Gastrocnemius medialis (tissue), 4 donors: ENCODE measurements at regions of chr10 and their contacts with region 1.

Region 1: DNA sequence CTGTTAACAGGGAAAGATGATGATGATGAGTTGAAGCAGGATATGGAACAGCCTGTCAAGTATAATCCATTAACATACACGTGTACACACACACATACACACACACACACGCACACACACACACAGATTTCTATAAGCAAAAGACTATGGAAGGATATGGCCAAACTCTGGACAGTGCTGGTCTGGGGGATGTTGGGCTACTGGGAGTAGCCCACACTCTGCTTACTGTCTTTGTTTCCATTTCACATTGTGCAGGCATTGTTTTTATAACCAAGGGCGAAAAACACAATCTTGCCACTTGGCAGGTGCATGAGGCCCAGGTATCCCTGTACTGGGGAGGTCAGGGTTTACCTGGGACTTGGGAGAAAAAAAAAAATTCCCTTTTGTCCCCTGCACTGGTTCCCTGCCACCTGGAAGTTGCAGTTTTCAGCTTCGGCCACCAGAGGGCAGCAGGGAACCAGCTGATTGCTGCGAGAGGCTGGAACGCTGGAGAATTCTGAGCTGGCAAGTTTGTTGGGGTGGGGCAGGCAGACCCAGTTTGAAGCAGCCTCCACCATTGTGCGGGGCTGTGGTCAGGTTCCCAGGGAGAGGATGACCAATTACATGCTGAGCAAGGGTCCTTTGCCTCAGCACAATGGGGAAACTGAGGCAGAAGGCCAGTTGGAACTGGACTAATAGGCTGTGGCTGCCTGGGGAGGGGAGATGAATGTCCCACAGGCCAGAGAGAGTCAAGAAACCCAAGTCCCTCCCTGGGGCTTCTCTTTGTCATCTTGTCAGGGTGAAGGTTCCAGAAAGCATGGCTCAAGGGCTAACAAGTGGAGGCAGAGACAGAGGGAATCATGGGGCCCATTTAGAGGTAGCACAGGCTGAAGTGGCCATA is 27.3 kb downstream of the PPIF start:
- DNase-seq: peak; percentile 62 to 70
- ATAC-seq: peak; percentile 57 to 71
- H3K4me3 ChIP-seq: no peak overlapping the region
- H3K27ac ChIP-seq: no peak overlapping the region
- H3K4me1 ChIP-seq: peaks cover 14 to 22% of the 10 kb centered on the region in 2 donors
- H3K27me3 ChIP-seq: no peaks in the 10 kb centered on the region
- CTCF ChIP-seq: peak; percentile 93 to 99 (median 97)
- POLR2A ChIP-seq: no peak

Region 2: GRCh38 chr10:79438021-79438698 is 63.6 kb after region 1 on chr10:
- in situ Hi-C with region 1: no loop called
- intact Hi-C with region 1: no loop called
- DNase-seq: peak in 1 of 2 donors; percentile 21
- ATAC-seq: no peak
- H3K4me3 ChIP-seq: no peak overlapping the region
- H3K27ac ChIP-seq: peak overlapping the region; percentile 91 to 98 (median 94)
- H3K4me1 ChIP-seq: peaks cover 97 to 100% of the 10 kb centered on the region in 2 donors
- H3K27me3 ChIP-seq: no peaks in the 10 kb centered on the region
- CTCF ChIP-seq: peak in 4 of 5 experiments; percentile 9 to 46 (median 33)
- POLR2A ChIP-seq: no peak

Region 3: DNA sequence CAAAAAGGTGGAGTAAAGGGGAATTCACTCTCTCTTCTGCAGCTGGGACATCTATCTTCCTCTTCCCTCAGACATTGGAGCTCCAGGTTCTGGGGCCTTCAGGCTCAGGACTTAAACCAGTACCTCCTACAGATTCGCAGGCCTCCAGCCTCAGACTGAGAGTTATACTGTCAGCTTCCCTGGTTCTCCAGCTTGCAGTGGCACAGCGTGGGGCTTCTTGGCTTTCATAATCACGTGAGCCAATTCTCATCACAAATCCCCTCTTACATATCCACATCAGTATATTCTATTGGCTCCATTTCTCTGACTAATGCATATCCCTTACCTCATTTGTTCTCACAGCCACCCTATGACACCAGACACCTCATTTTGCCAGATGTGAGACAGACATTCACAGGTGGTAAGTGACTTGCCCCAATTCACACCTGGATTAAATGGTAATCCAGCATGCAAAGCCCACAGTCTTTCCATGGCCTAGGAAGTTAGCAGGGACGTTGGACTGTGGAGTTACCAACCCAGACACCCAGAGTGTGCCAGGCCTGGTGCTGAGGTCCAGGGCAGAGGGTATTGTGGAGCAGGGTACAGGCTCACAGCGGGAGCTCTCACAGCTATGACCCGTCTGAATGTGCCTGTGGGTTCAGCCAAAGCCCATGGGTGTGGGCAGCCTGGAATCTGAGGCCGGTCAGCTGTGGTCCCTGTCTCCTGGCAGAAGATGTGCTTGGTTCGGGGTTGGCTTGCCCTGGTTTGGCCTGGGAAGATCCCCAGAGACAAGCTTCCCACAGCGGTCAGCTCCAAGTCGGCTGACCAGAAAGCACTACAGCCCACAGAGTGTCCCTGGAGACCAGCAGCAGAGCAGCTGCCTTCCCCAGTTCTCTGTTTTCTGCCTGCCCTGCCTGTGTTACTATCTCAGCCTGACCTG is 89.3 kb after region 1 on chr10:
- in situ Hi-C with region 1: loop called in 2 of 4 experiments (anchors 5 kb)
- intact Hi-C with region 1: loop called (anchors 1 kb)
- DNase-seq: peak; percentile 77 to 91
- ATAC-seq: peak; percentile 77 to 86
- H3K4me3 ChIP-seq: no peak overlapping the region
- H3K27ac ChIP-seq: peak overlapping the region; percentile 64 to 85 (median 77)
- H3K4me1 ChIP-seq: peaks cover 30 to 42% of the 10 kb centered on the region in 2 donors
- H3K27me3 ChIP-seq: no peaks in the 10 kb centered on the region
- CTCF ChIP-seq: no peak
- POLR2A ChIP-seq: no peak

Region 4: DNA sequence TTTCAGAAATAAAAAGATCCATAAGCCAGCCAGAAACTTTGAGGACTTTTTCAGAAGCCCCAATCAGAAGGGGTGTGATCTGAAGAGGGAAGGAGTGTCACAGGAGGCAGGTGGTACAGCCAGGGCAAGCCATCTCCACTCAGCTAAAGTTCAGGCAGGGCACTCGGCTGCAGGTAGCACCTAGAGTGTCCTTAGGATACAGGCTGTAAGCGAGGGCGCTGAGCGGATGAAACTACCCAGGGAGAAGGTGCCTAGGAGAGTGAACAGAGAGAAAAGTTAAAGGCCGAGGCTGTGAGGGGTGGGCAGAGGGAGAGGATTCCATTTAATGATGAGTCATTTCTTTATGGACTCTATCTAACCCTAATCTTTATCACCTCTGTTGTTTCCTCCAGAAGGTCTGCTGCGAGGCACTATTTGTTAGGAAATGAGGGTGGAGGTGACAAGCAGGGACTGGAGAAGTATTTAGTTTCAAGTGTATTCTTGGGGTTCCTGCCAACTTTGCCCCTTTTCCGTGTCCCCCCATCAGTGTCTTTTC is 100.6 kb after region 1 on chr10:
- in situ Hi-C with region 1: loop called in 2 of 4 experiments (anchors 5 to 10 kb)
- intact Hi-C with region 1: no loop called
- DNase-seq: no peak
- ATAC-seq: no peak
- H3K4me3 ChIP-seq: no peak overlapping the region
- H3K27ac ChIP-seq: no peak overlapping the region
- H3K4me1 ChIP-seq: no peaks in the 10 kb centered on the region
- H3K27me3 ChIP-seq: no peaks in the 10 kb centered on the region
- CTCF ChIP-seq: no peak
- POLR2A ChIP-seq: no peak

Region 5: GRCh38 chr10:79487296-79488194 is 113.0 kb after region 1 on chr10:
- in situ Hi-C with region 1: loop called in 1 of 4 experiments (anchors 10 kb)
- intact Hi-C with region 1: loop called (anchors 1 kb)
- DNase-seq: peak; percentile 31 to 67
- ATAC-seq: peak in 1 of 2 donors; percentile 72
- H3K4me3 ChIP-seq: no peak overlapping the region
- H3K27ac ChIP-seq: peak overlapping the region; percentile 67 to 72 (median 70)
- H3K4me1 ChIP-seq: peaks cover 8 to 28% of the 10 kb centered on the region in 2 donors
- H3K27me3 ChIP-seq: no peaks in the 10 kb centered on the region
- CTCF ChIP-seq: peak; percentile 49 to 69 (median 66)
- POLR2A ChIP-seq: no peak

Region 6: GRCh38 chr10:79608505-79609375 is 234.2 kb after region 1 on chr10:
- in situ Hi-C with region 1: no loop called
- intact Hi-C with region 1: loop called (anchors 5 kb)
- DNase-seq: no peak
- ATAC-seq: no peak
- H3K4me3 ChIP-seq: no peak overlapping the region
- H3K27ac ChIP-seq: no peak overlapping the region
- H3K4me1 ChIP-seq: no peaks in the 10 kb centered on the region
- H3K27me3 ChIP-seq: no peaks in the 10 kb centered on the region
- CTCF ChIP-seq: peak; percentile 19 to 62 (median 39)
- POLR2A ChIP-seq: no peak

Region 7: DNA sequence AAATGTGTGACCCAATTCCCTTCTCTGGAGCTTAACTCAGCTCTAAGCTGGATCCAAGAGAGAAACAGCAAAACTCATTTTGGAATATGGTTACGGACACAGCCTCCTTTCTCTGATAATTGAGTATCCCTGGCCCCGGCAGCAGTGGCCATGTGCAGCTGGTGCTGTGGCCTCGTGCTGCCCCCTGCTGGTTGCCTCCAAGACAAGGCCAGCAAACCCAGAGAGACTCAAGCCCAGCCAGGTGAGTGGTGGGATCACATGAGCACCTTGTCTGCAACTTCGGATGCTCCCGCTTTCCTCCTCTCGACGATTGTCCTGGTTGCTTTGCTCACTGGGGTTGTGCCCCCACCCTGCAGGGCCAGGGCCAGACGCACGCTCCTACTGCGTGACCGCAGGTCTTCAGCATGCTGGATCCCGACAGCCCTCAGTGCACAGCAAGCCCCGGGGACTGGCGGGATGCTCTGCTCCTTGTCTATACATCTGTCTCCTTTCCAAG is 554.9 kb after region 1 on chr10:
- in situ Hi-C with region 1: loop called in 1 of 4 experiments (anchors 25 kb)
- intact Hi-C with region 1: no loop called
- DNase-seq: peak; percentile 63
- ATAC-seq: peak; percentile 79 to 90
- H3K4me3 ChIP-seq: no peak overlapping the region
- H3K27ac ChIP-seq: no peak overlapping the region
- H3K4me1 ChIP-seq: peaks cover 0 to 3% of the 10 kb centered on the region in 2 donors
- H3K27me3 ChIP-seq: no peaks in the 10 kb centered on the region
- CTCF ChIP-seq: peak; percentile 78 to 96 (median 92)
- POLR2A ChIP-seq: no peak

Region 8: GRCh38 chr10:80144067-80144695 is 769.6 kb after region 1 on chr10:
- in situ Hi-C with region 1: no loop called
- intact Hi-C with region 1: loop called (anchors 5 kb)
- DNase-seq: no peak
- ATAC-seq: peak; percentile 38 to 62
- H3K4me3 ChIP-seq: no peak overlapping the region
- H3K27ac ChIP-seq: peak overlapping the region in 1 of 4 donors; percentile 13
- H3K4me1 ChIP-seq: peaks cover 7 to 13% of the 10 kb centered on the region in 2 donors
- H3K27me3 ChIP-seq: peaks cover 0 to 5% (median 0%) of the 10 kb centered on the region in 3 donors
- CTCF ChIP-seq: peak in 2 of 5 experiments; percentile 10 to 33
- POLR2A ChIP-seq: no peak